ENCODE measurements at regions of chr2 and their contacts with region 1.

Region 1: GRCh38 chr2:75608684-75609333 is 37.8 kb upstream of the MRPL19 start:
- DNase-seq: no peak
- H3K4me3 ChIP-seq: peak overlapping the region; percentile 40
- CTCF ChIP-seq: peak; percentile 95

Region 2: GRCh38 chr2:75447176-75447575 is 161.6 kb before region 1 on chr2:
- CTCF ChIA-PET with region 1: interaction called, 10 read pairs
- POLR2A ChIA-PET with region 1: no interaction called
- DNase-seq: no peak
- H3K4me3 ChIP-seq: no peak overlapping the region
- CTCF ChIP-seq: no peak

Region 3: GRCh38 chr2:75491129-75491753 is 117.6 kb before region 1 on chr2:
- CTCF ChIA-PET with region 1: interaction called, 26 read pairs
- POLR2A ChIA-PET with region 1: no interaction called
- DNase-seq: no peak
- H3K4me3 ChIP-seq: no peak overlapping the region
- CTCF ChIP-seq: no peak

Region 4: GRCh38 chr2:75539955-75540716 is 68.7 kb before region 1 on chr2:
- CTCF ChIA-PET with region 1: interaction called, 51 read pairs
- POLR2A ChIA-PET with region 1: interaction called, 6 read pairs
- DNase-seq: no peak
- H3K4me3 ChIP-seq: no peak overlapping the region
- CTCF ChIP-seq: no peak

Region 5: DNA sequence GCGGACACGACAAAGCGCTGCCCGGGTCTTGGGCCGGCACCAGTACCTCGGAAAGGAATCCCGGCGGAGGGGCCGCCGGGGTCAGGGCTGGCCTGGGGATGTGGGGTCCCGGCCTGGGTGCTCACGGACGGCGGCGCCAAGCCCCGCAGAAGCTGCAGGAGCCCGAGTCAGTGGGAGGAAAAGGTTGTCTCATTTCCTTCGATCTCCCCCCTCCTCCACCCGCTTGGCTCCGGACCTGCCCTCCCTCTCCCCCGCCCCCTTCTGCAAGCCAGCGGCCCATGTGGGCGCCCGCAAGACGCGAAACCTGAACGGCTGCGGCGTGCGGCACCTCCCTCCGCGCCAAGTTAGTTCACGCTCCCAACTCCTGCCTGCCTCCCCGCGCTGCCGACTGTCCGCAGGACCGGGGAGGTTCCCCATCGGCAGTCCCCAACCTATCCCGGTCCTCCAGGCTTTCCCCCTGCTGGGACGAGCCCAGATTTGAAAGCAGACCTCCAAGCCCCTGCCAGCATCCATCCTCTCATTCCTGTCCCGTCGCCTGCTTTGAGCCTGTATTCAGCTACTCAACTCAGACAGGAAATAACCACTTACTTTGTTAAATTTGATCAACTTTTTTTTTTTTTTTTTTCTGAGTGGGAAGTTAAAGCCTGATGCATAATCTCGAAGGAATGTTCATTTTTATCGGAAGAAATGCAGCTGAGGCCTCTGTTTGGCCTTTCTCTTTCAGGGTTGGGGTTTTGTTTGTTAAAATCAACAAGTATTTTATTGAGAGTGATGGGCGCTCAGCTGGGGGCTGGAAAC is 47.8 kb before region 1 on chr2 and contains the start of gene EVA1A:
- CTCF ChIA-PET with region 1: interaction called, 104 read pairs
- POLR2A ChIA-PET with region 1: interaction called, 53 read pairs
- DNase-seq: no peak
- H3K4me3 ChIP-seq: peak within 1 kb of the TSS; percentile 83
- CTCF ChIP-seq: no peak

Region 6: DNA sequence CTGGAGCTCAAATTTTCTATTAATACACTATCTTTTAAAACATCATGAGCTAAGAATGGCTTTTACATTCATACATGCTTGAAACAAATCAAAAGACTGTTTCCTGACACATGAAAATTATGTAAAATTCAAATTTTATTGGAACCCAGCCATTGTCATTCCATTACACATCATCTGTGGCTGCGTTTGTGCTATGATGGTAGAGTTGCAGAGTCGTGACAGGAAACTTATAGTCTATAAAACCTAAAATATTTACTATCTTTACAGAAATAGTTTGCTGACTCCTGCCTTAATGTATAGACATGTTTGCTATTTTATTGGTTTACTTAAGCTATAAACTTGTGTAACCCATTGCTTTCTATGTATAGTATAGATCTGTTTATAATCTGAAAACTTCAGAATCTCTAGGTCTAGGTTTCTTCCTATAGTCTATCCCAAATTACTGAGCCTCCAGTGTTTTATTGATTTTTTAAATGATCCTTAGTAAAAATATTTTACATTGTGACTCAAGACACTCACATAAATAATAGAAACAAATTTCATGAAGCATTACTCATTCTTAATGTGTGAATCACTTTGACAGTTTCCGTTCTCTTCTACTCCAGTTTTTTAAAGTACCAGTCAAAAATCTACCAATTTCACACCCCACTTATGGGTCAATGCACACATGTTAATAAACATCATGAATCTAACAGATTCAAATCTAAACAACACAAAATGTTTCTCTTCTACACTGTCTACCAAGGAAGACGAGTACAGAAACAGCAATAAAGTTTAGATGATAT is 11.3 kb after region 1 on chr2:
- CTCF ChIA-PET with region 1: interaction called, 90 read pairs
- POLR2A ChIA-PET with region 1: interaction called, 3 read pairs
- DNase-seq: no peak
- H3K4me3 ChIP-seq: no peak overlapping the region
- CTCF ChIP-seq: no peak

Region 7: GRCh38 chr2:75810611-75811330 is 202.0 kb after region 1 on chr2:
- CTCF ChIA-PET with region 1: no interaction called
- POLR2A ChIA-PET with region 1: no interaction called
- DNase-seq: no peak
- H3K4me3 ChIP-seq: no peak overlapping the region
- CTCF ChIP-seq: no peak

Measured in AG04449 (cell line).